PC-9 (cell line): ENCODE measurements at regions of chr3 and their contacts with region 1.

Region 1: DNA sequence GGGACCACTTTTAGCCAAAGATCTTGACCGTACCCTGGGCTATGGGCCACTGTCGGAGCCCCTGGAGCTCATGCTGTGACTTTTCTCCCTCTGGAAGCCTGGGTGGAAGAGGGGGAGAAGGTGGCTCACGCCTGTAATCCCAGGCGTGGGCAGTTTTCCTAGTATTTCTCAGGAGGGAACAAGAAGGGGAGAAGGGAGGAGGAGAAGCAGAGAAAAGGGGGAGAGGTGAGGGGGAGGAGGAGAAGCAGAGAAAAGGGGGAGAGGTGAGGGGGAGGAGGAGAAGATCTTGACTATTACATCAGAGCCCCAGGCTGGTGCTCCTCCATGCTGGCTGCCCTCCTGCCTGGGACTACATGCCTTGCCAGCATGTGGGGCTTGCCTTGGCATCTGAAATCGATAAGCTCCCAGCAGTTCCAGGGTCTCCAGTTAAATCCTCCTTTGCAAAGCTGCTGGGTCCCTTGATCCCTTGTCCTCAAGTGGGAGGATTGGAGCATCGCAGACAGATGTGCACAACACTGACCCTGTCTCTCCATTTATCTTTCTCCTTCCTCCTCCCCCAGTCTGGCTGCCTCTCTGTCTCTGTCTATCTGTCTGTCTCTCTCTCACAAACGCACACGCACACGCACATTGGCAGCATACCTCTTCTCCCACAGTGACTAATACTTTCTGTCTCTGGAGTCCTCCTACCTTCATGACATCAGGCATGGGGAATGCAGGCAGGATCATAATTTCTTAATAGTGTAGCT is 41.6 kb downstream of the MRAS start:
- DNase-seq: peak; percentile 59 to 82
- H3K4me3 ChIP-seq: no peak overlapping the region
- H3K27ac ChIP-seq: no peak overlapping the region
- H3K4me1 ChIP-seq: peaks cover 12% of the 10 kb centered on the region
- H3K27me3 ChIP-seq: no peaks in the 10 kb centered on the region
- CTCF ChIP-seq: no peak

Region 2: DNA sequence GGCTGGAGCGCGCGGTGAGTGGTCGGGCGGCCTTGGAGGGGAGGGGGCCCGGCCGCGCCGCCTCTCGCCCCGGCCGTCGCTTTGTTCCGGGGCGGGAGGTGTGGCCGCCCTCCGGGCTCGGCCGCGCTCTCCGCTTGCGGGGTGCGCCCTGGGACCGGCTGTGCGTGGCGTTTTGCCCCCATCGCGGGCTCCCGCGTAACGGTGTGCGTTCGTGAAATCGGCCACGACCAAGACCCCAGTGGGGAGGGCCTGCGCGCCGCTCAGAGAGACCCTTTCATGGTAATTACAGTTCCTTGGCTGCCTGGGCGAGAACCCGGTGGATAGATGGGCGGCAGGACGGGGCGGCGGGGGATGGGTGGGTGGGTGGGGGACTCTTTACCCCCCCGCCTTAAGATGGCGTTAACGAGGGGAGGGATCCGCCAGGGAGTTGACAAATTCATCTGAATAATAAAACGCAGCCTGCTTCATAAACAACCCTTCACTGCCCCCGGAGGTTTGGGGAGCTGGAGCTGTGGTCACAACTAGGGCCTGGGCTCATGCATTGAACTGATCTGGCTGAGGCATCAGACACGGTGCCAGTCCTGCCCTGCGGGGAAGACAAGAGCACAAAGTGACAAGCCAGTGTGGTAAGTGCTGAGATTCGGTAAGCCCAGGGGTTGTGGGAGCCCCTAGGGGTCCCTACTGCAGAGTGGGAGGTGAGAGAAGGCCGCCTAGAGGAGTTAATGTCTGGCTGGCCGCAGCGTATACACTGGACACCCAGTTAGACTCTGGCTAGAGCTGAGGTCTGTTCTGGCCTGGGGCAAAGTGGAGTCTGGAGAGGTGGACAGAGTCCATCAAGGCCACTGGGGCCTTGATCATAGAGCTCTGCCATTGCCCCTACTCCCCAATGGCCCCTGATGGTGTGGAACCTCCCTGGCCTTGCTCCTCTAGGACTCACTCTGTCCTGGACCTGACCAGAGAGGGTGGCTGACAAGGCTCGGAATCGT is 41.0 kb before region 1 on chr3:
- CTCF ChIA-PET with region 1: interaction called, 10 read pairs
- POLR2A ChIA-PET with region 1: no interaction called
- intact Hi-C with region 1: no loop called
- DNase-seq: no peak
- H3K4me3 ChIP-seq: peak overlapping the region; percentile 65; the same call in 1 of the 2 replicates
- H3K27ac ChIP-seq: no peak overlapping the region
- H3K4me1 ChIP-seq: no peaks in the 10 kb centered on the region
- H3K27me3 ChIP-seq: peaks cover 3% of the 10 kb centered on the region; the same call in 1 of the 2 replicates
- CTCF ChIP-seq: no peak

Region 3: GRCh38 chr3:138493804-138494606 is 104.0 kb after region 1 on chr3:
- CTCF ChIA-PET with region 1: no interaction called
- POLR2A ChIA-PET with region 1: no interaction called
- intact Hi-C with region 1: no loop called
- DNase-seq: no peak
- H3K4me3 ChIP-seq: no peak overlapping the region
- H3K27ac ChIP-seq: 0 out of 2 replicates have a peak overlapping the region, but pooled peaks have one; percentile 14
- H3K4me1 ChIP-seq: 0 out of 2 replicates have a peak, but pooled peaks cover 4% of the 10 kb centered on the region
- H3K27me3 ChIP-seq: no peaks in the 10 kb centered on the region
- CTCF ChIP-seq: no peak